MCF 10A (cell line): ENCODE measurements at regions of chr10 and their contacts with region 1.

Region 1: DNA sequence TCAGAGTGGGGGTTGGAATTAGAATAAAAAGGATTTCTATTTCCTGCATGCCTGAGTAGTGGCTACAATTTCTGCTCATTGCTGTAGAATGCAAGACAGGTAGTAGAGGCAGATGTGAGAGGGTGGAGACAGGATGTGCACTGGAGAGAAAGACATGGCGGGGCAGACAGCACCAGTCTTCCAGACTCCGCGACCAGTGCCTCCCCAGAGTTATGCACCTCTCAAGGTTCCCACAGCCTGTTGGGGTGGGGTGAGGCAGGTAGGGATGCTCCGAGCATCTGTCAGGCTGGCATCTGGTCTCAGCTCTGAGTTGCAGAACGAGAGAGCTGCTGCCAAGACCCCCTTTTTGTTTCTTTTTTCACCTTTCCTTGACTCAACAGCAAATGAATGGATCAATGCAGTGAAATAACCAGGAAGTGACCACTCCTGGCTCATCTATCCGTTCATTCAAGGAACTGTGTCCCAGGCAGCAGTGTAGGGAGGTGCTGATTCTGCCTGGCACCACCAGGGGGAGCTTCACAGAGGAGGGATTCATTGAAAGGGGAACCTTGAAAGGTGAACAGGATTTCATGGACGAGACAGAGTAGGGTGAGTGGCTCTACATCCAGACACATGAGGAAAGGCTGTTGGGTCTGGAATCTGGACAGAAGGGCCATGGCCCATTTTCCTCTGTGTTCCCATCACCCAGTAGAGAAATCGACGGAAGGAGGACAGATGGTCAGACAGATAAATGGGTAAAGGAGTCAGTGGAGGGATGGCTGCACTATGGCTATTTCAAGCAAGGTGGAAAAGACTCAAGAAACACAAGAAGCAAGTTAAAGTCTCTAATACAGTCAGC is 17.2 kb upstream of the SLC18A3 start:
- DNase-seq: peak; percentile 73
- H3K4me3 Mint-ChIP-seq: no peak overlapping the region
- H3K27ac Mint-ChIP-seq: no peak overlapping the region
- H3K4me1 Mint-ChIP-seq: peaks cover 6% of the 10 kb centered on the region
- H3K27me3 Mint-ChIP-seq: no peaks in the 10 kb centered on the region
- CTCF ChIP-seq: peak; percentile 84

Region 2: GRCh38 chr10:49387029-49387428 is 205.9 kb before region 1 on chr10:
- CTCF ChIA-PET with region 1: no interaction called
- POLR2A ChIA-PET with region 1: no interaction called
- intact Hi-C with region 1: no loop called
- DNase-seq: peak; percentile 88
- H3K4me3 Mint-ChIP-seq: no peak overlapping the region
- H3K27ac Mint-ChIP-seq: no peak overlapping the region
- H3K4me1 Mint-ChIP-seq: no peaks in the 10 kb centered on the region
- H3K27me3 Mint-ChIP-seq: peaks cover 50% of the 10 kb centered on the region
- CTCF ChIP-seq: no peak

Region 3: DNA sequence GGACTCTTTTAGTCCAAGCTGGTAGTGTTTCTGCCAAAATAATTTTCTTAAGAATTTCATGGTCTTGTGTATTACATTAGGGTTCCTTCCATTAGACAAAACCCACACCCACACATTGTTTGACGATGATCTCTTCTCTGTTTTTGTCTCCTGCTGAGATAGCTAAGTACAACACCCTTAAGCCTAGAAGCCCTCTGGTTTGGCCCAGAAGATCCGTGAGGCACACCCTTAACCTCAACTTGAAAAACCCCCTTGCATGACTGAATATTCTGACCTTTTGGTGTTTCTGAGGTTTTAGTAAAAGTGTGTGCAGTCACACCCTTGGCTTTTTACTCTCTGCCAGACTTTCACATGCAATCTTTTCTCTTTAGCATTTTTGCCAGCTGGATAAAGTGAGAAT is 24.7 kb before region 1 on chr10:
- CTCF ChIA-PET with region 1: interaction called, 52 read pairs
- POLR2A ChIA-PET with region 1: interaction called, 5 read pairs
- intact Hi-C with region 1: no loop called
- DNase-seq: peak; percentile 29
- H3K4me3 Mint-ChIP-seq: peak overlapping the region; percentile 65
- H3K27ac Mint-ChIP-seq: peak overlapping the region; percentile 88
- H3K4me1 Mint-ChIP-seq: peaks cover 56% of the 10 kb centered on the region
- H3K27me3 Mint-ChIP-seq: no peaks in the 10 kb centered on the region
- CTCF ChIP-seq: no peak

Region 4: GRCh38 chr10:49579621-49580020 is 13.3 kb before region 1 on chr10:
- CTCF ChIA-PET with region 1: interaction called, 36 read pairs
- POLR2A ChIA-PET with region 1: no interaction called
- intact Hi-C with region 1: no loop called
- DNase-seq: no peak
- H3K4me3 Mint-ChIP-seq: no peak overlapping the region
- H3K27ac Mint-ChIP-seq: no peak overlapping the region
- H3K4me1 Mint-ChIP-seq: peaks cover 30% of the 10 kb centered on the region
- H3K27me3 Mint-ChIP-seq: no peaks in the 10 kb centered on the region
- CTCF ChIP-seq: no peak

Region 5: DNA sequence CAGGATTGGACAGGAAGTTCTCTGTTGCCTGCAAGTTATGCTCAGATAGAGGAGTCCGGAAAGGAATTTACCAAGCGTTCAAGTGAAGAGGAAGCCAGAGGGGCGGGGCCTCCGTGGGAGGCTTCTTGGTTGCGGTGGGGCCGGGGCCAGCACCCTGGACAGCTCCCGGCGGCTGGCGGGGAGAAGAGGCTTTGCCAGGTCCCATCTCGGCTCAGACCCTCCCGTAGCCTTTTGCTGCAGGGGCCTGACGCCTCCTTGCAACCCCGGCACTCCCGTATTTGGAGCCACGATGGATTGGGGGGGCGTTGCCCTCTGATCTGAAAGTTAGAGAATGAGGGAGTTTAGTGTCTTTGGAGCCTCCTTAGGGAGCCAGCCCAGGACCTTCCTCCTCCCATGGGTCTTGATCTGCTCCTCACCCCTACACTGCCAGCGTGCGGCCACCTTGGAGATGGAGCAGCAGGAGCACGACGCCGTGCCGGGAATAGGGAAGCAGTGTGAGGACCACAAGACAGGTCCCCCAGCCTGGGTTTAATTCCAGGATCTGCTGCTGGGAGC is 14.1 kb after region 1 on chr10:
- CTCF ChIA-PET with region 1: interaction called, 29 read pairs
- POLR2A ChIA-PET with region 1: interaction called, 3 read pairs
- intact Hi-C with region 1: no loop called
- DNase-seq: peak; percentile 67
- H3K4me3 Mint-ChIP-seq: no peak overlapping the region
- H3K27ac Mint-ChIP-seq: no peak overlapping the region
- H3K4me1 Mint-ChIP-seq: peaks cover 11% of the 10 kb centered on the region
- H3K27me3 Mint-ChIP-seq: peaks cover 63% of the 10 kb centered on the region
- CTCF ChIP-seq: no peak

Region 6: GRCh38 chr10:49642311-49642710 is 49.4 kb after region 1 on chr10:
- CTCF ChIA-PET with region 1: no interaction called
- POLR2A ChIA-PET with region 1: no interaction called
- intact Hi-C with region 1: no loop called
- DNase-seq: no peak
- H3K4me3 Mint-ChIP-seq: no peak overlapping the region
- H3K27ac Mint-ChIP-seq: no peak overlapping the region
- H3K4me1 Mint-ChIP-seq: no peaks in the 10 kb centered on the region
- H3K27me3 Mint-ChIP-seq: peaks cover 49% of the 10 kb centered on the region
- CTCF ChIP-seq: no peak

Region 7: GRCh38 chr10:49690698-49691356 is 97.9 kb after region 1 on chr10:
- CTCF ChIA-PET with region 1: no interaction called
- POLR2A ChIA-PET with region 1: no interaction called
- intact Hi-C with region 1: no loop called
- DNase-seq: no peak
- H3K4me3 Mint-ChIP-seq: no peak overlapping the region
- H3K27ac Mint-ChIP-seq: no peak overlapping the region
- H3K4me1 Mint-ChIP-seq: peaks cover 10% of the 10 kb centered on the region
- H3K27me3 Mint-ChIP-seq: peaks cover 41% of the 10 kb centered on the region
- CTCF ChIP-seq: no peak

Region 8: DNA sequence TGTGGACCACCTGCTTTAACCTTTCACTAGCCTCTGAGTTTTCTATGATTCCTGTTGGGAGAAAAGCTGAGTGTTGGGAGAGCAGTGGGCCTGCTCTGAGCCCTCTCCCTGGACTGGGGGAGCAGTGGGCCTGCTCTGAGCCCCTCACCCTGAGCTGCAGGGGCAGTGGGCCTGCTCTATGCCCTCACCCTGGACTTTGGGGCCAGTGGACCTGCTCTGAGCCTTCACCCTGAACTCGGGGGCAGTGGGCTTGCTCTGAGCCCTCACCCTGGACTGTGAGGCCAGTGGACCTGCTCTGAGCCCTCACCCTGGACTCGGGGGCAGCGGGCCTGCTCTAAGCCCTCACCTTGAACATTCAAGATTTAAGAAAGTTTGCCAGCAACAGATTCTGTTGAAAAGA is 428.7 kb after region 1 on chr10:
- CTCF ChIA-PET with region 1: no interaction called
- POLR2A ChIA-PET with region 1: no interaction called
- intact Hi-C with region 1: no loop called
- DNase-seq: no peak
- H3K4me3 Mint-ChIP-seq: no peak overlapping the region
- H3K27ac Mint-ChIP-seq: no peak overlapping the region
- H3K4me1 Mint-ChIP-seq: no peaks in the 10 kb centered on the region
- H3K27me3 Mint-ChIP-seq: peaks cover 4% of the 10 kb centered on the region
- CTCF ChIP-seq: no peak

Region 9: DNA sequence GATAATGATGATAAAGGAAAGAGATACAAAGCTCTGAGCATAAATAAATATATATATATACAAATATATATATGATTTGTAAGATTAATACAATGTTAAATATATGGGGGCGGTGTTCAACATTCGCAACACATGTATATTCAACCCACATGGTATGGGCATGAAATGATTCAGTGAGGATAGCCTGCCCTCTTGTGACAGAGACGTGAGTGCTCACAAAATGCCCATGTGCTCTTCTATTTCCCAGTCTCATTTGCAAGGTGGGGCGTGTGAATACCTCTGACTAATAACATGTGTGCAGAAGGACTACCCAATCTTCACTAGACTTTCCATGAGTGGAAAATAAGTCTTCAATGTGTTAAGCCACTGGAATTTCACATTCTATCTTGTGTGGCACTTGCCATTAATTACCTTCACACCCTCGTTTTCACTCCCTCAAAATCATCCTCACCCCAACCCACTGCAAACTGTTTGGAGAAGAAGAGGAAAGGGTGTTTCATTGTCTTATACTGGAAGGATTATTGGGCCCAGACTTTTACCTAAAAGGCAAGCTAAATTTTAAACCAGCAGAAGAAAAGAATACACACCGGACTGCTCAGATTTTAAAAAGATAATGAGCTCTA is 631.5 kb after region 1 on chr10:
- CTCF ChIA-PET with region 1: interaction called, 10 read pairs
- POLR2A ChIA-PET with region 1: no interaction called
- intact Hi-C with region 1: loop called (anchors 1 kb)
- DNase-seq: peak; percentile 84
- H3K4me3 Mint-ChIP-seq: no peak overlapping the region
- H3K27ac Mint-ChIP-seq: no peak overlapping the region
- H3K4me1 Mint-ChIP-seq: no peaks in the 10 kb centered on the region
- H3K27me3 Mint-ChIP-seq: peaks cover 46% of the 10 kb centered on the region
- CTCF ChIP-seq: peak; percentile 65